GM10248 (cell line): ENCODE measurements at regions of chr1 and their contacts with region 1.

Region 1: DNA sequence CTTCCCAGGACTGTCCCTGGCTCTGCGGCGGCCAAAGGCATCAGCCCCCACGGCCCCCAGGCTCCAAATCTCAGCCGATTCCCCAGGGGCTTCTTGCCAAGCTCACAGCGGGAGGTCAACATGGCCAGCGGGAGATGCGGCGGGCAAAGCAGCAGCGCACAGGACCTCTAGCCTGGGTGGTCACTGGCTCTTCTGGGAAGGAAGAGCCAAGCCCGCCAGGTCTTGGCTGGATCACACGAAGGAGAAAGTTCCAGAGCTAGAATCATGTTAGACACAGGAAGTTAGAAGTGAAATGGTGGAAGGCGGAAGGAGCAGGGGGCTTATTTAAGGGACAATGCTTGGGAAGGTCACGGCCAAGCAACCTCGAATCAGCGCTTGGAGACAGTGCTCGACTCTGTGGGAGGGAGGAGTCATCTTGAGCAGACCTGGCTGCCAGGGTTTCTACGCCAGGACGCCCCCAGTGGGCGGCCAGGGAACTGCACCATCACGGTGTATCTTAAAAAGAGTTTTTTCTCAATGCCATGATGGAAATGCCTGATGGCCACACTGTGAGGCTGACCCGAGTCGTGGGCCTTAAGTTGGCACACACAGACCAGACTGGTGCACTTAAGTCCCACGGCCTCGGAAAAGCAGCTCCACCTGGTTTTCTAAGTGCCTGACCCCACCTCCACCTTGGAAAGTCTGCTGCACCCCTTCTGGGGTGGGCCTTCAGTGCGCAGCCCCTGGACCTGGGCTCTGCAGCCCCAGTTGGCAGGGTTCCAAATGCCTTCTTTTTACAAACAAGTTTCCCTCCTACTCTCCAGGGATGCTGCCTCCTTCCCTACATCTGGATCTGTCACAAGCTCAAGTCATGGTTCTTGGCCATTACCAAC is 29.3 kb downstream of the SLC66A1 start:
- DNase-seq: peak; percentile 89
- CTCF ChIP-seq: peak; percentile 82

Region 2: GRCh38 chr1:19311959-19312781 is 29.3 kb before region 1 on chr1 and contains the starts of genes AKR7A2 and SLC66A1:
- CTCF ChIA-PET with region 1: interaction called, 11 read pairs
- POLR2A ChIA-PET with region 1: no interaction called
- DNase-seq: peak; percentile 100
- CTCF ChIP-seq: no peak

Region 3: GRCh38 chr1:19330449-19331135 is 10.8 kb before region 1 on chr1:
- CTCF ChIA-PET with region 1: interaction called, 17 read pairs
- POLR2A ChIA-PET with region 1: no interaction called
- DNase-seq: no peak
- CTCF ChIP-seq: no peak

Region 4: GRCh38 chr1:19361611-19362147 is 20.2 kb after region 1 on chr1:
- CTCF ChIA-PET with region 1: interaction called, 10 read pairs
- POLR2A ChIA-PET with region 1: no interaction called
- DNase-seq: no peak
- CTCF ChIP-seq: no peak

Region 5: DNA sequence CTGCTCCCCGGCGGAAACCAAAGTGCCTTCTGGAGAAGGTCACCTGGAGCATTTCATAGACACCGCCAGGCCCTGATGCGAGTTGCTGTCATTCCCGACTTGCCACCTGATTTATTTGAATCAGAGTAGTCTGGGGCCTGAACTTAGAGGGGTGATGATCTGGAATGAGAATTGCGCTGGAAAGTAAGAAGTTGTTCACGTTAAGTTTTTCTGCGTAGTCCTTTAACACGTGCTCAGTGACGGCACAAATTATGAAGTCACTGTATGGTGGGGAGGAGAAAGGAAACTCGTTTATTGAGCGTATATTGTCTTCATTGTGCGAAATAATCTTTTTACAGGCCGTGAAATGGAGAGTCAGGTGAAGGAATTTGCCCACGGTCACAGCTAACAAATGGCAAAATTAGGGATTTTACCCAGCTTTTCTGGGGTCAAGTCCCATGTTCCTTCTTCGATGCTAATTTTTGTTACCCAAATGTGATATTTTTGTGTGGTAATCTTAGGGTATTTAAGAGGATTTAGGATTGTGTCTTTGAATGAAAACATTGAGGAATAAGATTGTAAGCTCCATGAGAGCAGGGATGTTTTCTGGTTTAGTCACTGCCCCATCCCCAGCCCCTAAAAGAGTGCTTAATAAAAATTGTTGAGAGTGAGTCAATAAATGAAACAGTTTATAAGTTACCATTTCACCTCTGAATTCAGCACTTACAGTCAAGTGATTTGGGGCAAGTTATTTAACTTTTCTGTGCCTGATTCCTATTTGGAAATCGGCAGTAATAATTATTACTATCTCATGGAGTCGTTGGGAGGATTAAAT is 256.3 kb after region 1 on chr1:
- CTCF ChIA-PET with region 1: no interaction called
- POLR2A ChIA-PET with region 1: no interaction called
- DNase-seq: no peak
- CTCF ChIP-seq: no peak

Region 6: DNA sequence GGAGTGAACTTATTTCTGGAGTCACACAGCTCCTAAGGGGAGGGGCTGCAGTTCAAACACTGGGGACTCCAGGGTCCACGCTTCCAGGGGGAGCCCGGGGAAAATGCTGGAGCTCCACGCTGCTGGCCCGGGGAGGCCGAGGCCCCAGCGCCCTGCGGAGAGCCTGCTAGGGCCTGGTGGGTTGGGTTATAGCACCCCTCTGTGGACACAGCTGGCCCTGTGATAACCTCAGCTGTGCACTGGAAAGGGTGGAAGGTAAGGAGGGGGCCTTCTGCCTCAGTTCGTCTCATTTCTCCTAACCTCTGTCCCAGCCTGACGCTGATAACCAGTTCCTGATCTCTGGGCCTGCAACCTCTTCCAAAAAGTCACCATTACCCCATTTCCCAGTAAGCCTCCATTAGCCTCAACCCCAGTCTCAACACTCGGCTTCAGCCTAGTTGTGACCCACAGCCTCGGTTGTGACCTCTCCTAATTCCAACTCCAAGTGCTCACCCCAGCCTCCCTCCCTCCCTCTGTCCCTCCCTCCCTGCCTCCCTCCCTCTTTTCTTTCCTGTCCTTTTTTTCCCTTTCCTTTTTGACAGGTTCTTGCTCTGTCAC is 309.8 kb after region 1 on chr1:
- CTCF ChIA-PET with region 1: interaction called, 24 read pairs
- POLR2A ChIA-PET with region 1: no interaction called
- DNase-seq: peak; percentile 77
- CTCF ChIP-seq: peak; percentile 85